Naive thymus-derived CD4-positive, alpha-beta T cell (primary cell): ENCODE measurements at regions of chr3 and their contacts with region 1.

Region 1: DNA sequence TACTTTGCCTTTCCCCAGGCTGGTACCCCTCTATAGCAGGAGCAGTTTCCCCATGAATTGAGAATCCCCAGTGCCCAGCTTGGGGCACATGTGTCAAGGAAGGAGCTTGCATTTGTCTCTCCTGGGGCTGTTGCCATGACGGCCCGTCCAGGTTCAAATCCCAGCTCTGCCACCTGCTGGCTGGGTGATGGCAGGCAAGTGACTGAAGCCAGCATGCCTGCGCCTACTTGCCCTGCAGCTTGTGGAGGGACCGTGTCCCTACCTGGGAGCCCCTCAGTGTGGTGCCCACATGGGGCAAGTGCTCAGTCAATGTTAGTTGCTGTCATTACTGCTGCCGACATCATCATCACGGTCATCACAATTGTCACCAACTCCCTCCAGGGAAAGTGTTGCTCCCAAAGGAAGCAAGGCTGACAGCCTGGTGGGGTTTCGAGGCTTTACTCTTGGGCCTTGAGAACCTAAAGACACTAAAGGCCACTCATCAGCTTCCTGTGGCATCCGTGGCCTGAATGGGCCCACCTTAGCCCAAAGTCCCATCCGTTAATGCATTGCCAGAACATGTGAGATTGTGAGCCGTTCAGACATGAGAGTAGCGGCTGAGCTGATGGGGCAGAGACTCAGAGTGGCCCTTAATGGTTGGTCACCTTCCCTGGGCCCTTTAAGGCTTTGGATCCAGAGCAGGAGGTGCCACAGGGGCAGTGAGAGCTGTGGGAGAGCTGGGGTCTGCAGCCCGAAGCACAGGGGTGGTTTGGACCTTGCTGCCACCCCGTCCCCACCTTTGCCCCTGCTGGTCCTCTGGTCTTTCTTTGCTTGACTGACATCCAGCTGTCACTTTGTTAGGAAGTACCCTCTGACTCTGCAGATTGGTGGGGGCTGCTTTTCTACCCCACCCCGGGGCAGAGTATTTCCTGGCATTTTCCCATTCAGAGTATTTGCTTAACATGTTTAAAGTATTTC is 144.3 kb downstream of the DNAJB8 start:
- DNase-seq: peak; percentile 32 to 74 (median 68)
- ATAC-seq: peak; percentile 67
- H3K4me3 ChIP-seq: no peak overlapping the region
- H3K4me3 Mint-ChIP-seq: peak overlapping the region in 3 of 10 donors; percentile 11 to 33 (median 25)
- H3K27ac ChIP-seq: peak overlapping the region; percentile 78
- H3K27ac Mint-ChIP-seq: peak overlapping the region in 8 of 9 donors; percentile 70 to 91 (median 84)
- H3K4me1 ChIP-seq: peaks cover 3 to 54% of the 10 kb centered on the region in 2 donors
- H3K4me1 Mint-ChIP-seq: peaks cover 18 to 84% (median 75%) of the 10 kb centered on the region in 7 donors
- H3K27me3 ChIP-seq: no peaks in the 10 kb centered on the region
- H3K27me3 Mint-ChIP-seq: no peaks in the 10 kb centered on the region

Region 2: DNA sequence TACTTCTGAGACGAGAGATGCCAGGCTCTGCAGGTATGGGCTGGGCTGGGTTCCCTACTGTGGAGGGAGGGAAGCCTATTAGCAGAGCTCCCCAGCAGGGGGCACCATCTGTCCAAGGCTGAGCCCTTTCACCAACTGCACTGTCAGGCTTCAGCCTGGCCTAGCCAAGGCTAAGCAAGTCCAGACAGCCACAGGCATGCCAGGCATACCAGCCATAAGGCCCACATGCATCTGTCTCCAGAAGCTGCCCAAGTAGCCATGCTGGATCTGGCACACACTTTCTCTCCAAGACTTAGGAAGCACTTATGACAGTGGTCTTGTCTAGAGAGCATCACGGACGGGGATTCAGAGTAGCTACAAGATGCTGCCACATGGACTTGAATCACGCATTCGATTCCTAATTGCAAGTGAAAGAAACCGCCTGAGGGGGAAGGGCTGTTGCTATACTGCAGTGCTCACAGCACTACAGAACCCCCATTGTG is 227.1 kb before region 1 on chr3:
- CTCF ChIA-PET with region 1: interaction called, 36 read pairs
- POLR2A ChIA-PET with region 1: no interaction called
- intact Hi-C with region 1: loop called in 1 of 2 experiments (anchors 1 kb)
- DNase-seq: peak; percentile 51 to 79 (median 73)
- ATAC-seq: peak; percentile 99
- H3K4me3 ChIP-seq: no peak overlapping the region
- H3K4me3 Mint-ChIP-seq: no peak overlapping the region
- H3K27ac ChIP-seq: no peak overlapping the region
- H3K27ac Mint-ChIP-seq: peak overlapping the region in 4 of 9 donors; percentile 16 to 68 (median 36)
- H3K4me1 ChIP-seq: no peaks in the 10 kb centered on the region
- H3K4me1 Mint-ChIP-seq: peaks cover 1 to 18% (median 6%) of the 10 kb centered on the region in 7 donors
- H3K27me3 ChIP-seq: no peaks in the 10 kb centered on the region
- H3K27me3 Mint-ChIP-seq: no peaks in the 10 kb centered on the region

Region 3: GRCh38 chr3:128153156-128154041 is 168.9 kb before region 1 on chr3 and contains the start of gene EEFSEC:
- CTCF ChIA-PET with region 1: interaction called, 3 read pairs
- POLR2A ChIA-PET with region 1: interaction called, 3 read pairs
- intact Hi-C with region 1: loop called (anchors 1 to 10 kb)
- DNase-seq: peak; percentile 75 to 93 (median 82)
- ATAC-seq: peak; percentile 95
- H3K4me3 ChIP-seq: peak within 1 kb of the TSS; percentile 79
- H3K4me3 Mint-ChIP-seq: peak within 1 kb of the TSS; percentile 84 to 98 (median 94)
- H3K27ac ChIP-seq: peak within 1 kb of the TSS; percentile 77
- H3K27ac Mint-ChIP-seq: peak within 1 kb of the TSS; percentile 85 to 98 (median 95)
- H3K4me1 ChIP-seq: peaks cover 13% of the 10 kb centered on the region in 2 donors
- H3K4me1 Mint-ChIP-seq: peaks cover 16 to 59% (median 47%) of the 10 kb centered on the region in 7 donors
- H3K27me3 ChIP-seq: no peaks in the 10 kb centered on the region
- H3K27me3 Mint-ChIP-seq: no peaks in the 10 kb centered on the region
- total RNA-seq, gene EEFSEC: 17.3 to 18.5 (median 17.9) TPM

Region 4: DNA sequence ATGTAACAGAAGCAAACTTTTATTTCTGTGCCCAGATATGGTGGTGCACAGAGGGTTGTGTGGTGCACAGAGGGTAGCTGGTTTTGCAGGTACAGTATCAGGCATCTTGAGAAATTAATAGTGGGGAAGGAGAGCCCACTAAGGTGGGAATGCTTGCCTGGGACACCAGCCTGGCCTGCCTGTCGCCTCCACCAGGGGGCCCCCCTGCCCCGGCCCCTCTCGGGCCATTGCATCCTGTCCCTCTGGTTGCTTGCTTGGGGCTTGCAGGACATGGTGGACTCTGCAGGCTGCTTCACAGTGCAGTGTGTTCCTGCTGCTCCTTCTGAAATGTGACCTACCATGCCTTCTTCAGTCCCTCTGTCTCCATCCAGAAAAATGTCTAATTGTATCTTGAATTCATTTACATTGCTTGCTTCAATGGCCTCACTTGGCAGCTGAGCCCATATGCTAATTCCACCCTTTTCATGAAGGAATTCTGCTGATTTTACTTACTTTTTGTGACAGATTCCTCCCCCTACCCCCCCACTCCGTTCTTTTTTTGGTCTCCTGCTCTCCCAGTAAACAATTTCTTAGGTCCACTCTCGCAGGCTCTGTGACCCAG is 95.4 kb before region 1 on chr3:
- CTCF ChIA-PET with region 1: interaction called, 54 read pairs
- POLR2A ChIA-PET with region 1: interaction called, 3 read pairs
- intact Hi-C with region 1: loop called (anchors 1 kb)
- DNase-seq: peak in 6 of 9 donors; percentile 8 to 38 (median 20)
- ATAC-seq: peak; percentile 53
- H3K4me3 ChIP-seq: no peak overlapping the region
- H3K4me3 Mint-ChIP-seq: no peak overlapping the region
- H3K27ac ChIP-seq: no peak overlapping the region
- H3K27ac Mint-ChIP-seq: peak overlapping the region in 7 of 9 donors; percentile 32 to 62 (median 45)
- H3K4me1 ChIP-seq: no peaks in the 10 kb centered on the region
- H3K4me1 Mint-ChIP-seq: peaks cover 0 to 45% (median 26%) of the 10 kb centered on the region in 7 donors
- H3K27me3 ChIP-seq: no peaks in the 10 kb centered on the region
- H3K27me3 Mint-ChIP-seq: no peaks in the 10 kb centered on the region

Region 5: GRCh38 chr3:128297401-128298138 is 24.8 kb before region 1 on chr3:
- CTCF ChIA-PET with region 1: interaction called, 36 read pairs
- POLR2A ChIA-PET with region 1: interaction called, 41 read pairs
- intact Hi-C with region 1: no loop called
- DNase-seq: peak in 1 of 9 donors; percentile 7
- ATAC-seq: no peak
- H3K4me3 ChIP-seq: no peak overlapping the region
- H3K4me3 Mint-ChIP-seq: peak overlapping the region in 5 of 10 donors; percentile 8 to 85 (median 52)
- H3K27ac ChIP-seq: no peak overlapping the region
- H3K27ac Mint-ChIP-seq: peak overlapping the region in 8 of 9 donors; percentile 60 to 100 (median 89)
- H3K4me1 ChIP-seq: peaks cover 16 to 43% of the 10 kb centered on the region in 2 donors
- H3K4me1 Mint-ChIP-seq: peaks cover 30 to 93% (median 77%) of the 10 kb centered on the region in 7 donors
- H3K27me3 ChIP-seq: no peaks in the 10 kb centered on the region
- H3K27me3 Mint-ChIP-seq: no peaks in the 10 kb centered on the region

Region 6: GRCh38 chr3:128497387-128498126 is 175.2 kb after region 1 on chr3:
- CTCF ChIA-PET with region 1: interaction called, 3 read pairs
- POLR2A ChIA-PET with region 1: interaction called, 3 read pairs
- intact Hi-C with region 1: loop called in 1 of 2 experiments (anchors 5 kb)
- DNase-seq: peak; percentile 55 to 86 (median 72)
- ATAC-seq: peak; percentile 75
- H3K4me3 ChIP-seq: peak overlapping the region; percentile 5
- H3K4me3 Mint-ChIP-seq: peak overlapping the region; percentile 69 to 85 (median 77)
- H3K27ac ChIP-seq: no peak overlapping the region
- H3K27ac Mint-ChIP-seq: peak overlapping the region in 2 of 9 donors; percentile 41 to 62
- H3K4me1 ChIP-seq: peaks cover 0 to 4% of the 10 kb centered on the region in 2 donors
- H3K4me1 Mint-ChIP-seq: peaks cover 4 to 14% (median 9%) of the 10 kb centered on the region in 7 donors
- H3K27me3 ChIP-seq: peaks cover 0 to 5% of the 10 kb centered on the region in 2 donors
- H3K27me3 Mint-ChIP-seq: peaks cover 54 to 69% (median 59%) of the 10 kb centered on the region in 5 donors